ENCODE measurements at regions of chr1 and their contacts with region 1.

Region 1: GRCh38 chr1:114219172-114219868 is 65.7 kb upstream of the SYT6 start:
- DNase-seq: no peak
- H3K4me3 ChIP-seq: no peak overlapping the region
- H3K27ac ChIP-seq: no peak overlapping the region
- H3K4me1 ChIP-seq: no peaks in the 10 kb centered on the region
- H3K27me3 ChIP-seq: no peaks in the 10 kb centered on the region
- CTCF ChIP-seq: no peak

Region 2: GRCh38 chr1:113978863-113979702 is 240.2 kb before region 1 on chr1 and contains the start of gene OLFML3:
- intact Hi-C with region 1: loop called (anchors 10 kb)
- DNase-seq: peak; percentile 88
- H3K4me3 ChIP-seq: peak within 1 kb of the TSS; percentile 10
- H3K27ac ChIP-seq: peak within 1 kb of the TSS; percentile 65
- H3K4me1 ChIP-seq: peaks cover 5% of the 10 kb centered on the region
- H3K27me3 ChIP-seq: no peaks in the 10 kb centered on the region
- CTCF ChIP-seq: peak; percentile 53
- total RNA-seq, gene OLFML3: 6.1 to 17.4 TPM

Measured in colonic mucosa (tissue), 4 donors.